ENCODE measurements at regions of chr1 and their contacts with region 1.

Region 1: GRCh38 chr1:155017041-155017945 is 14.7 kb downstream of the ZBTB7B start:
- DNase-seq: peak; percentile 68 to 96
- H3K4me3 ChIP-seq: peak overlapping the region; percentile 42 to 59
- H3K27ac ChIP-seq: peak overlapping the region; percentile 82 to 89
- H3K4me1 ChIP-seq: peaks cover 7 to 15% of the 10 kb centered on the region in 2 donors
- H3K27me3 ChIP-seq: no peaks in the 10 kb centered on the region
- CTCF ChIP-seq: peak; percentile 99 to 100 (median 99)

Region 2: GRCh38 chr1:154961497-154962262 is 55.6 kb before region 1 on chr1 and contains the start of gene PYGO2:
- intact Hi-C with region 1: loop called (anchors 1 kb)
- DNase-seq: peak in 1 of 2 donors; percentile 90
- H3K4me3 ChIP-seq: peak within 1 kb of the TSS; percentile 97
- H3K27ac ChIP-seq: peak within 1 kb of the TSS; percentile 95 to 97
- H3K4me1 ChIP-seq: peaks cover 3 to 27% of the 10 kb centered on the region in 2 donors
- H3K27me3 ChIP-seq: no peaks in the 10 kb centered on the region
- CTCF ChIP-seq: peak; percentile 45 to 95 (median 52)
- total RNA-seq, gene PYGO2: 48.7 TPM

Measured in ascending aorta (tissue), 2 donors.